GM12878 (cell line): ENCODE measurements at regions of chr2 and their contacts with region 1.

Region 1: DNA sequence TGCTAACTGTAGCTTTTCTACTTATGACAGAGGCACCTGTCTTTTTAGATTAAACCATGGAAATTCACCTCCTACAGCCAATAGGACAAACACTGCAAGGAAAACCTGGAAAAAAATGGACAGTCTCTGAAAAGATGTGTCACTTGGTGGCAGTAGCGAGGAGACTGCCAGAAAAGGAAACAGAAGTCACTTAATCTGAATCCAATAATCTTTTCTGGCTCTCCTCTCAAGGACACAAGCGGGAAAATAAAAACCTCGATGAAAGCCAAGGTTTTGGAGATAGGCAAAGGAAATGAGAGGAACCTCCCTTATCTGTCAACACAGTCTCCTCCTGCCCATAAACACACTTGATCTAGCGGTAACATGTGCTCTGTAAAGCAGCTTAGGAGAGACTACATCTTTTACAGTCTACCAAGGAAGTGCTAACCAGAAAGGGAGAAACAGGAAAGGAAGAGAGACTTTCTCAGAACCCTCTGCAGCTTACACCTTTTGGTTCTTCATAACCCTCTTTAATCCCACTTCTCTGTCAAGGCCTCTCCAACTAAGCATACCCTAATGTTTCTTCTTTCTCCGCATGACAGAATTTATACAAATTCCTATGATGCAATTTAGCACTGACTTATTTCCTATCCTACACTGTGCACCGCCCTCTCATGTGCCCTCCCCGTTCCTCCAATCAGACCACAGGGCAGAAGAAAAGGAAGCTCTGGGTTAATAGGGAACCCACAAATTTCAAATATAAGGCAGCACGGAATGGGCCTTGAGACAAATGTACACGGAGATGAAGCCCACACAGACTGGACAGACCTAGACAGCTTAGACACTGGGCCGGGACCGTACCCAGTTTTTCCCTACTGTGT is 52.8 kb downstream of the CLASP1 start:
- DNase-seq: peak; percentile 60
- ATAC-seq: peak; percentile 82
- H3K4me3 ChIP-seq: peak overlapping the region; percentile 62
- H3K27ac ChIP-seq: peak overlapping the region; percentile 84
- H3K4me1 ChIP-seq: peaks cover 38% of the 10 kb centered on the region
- H3K27me3 ChIP-seq: no peaks in the 10 kb centered on the region
- CTCF ChIP-seq: peak; percentile 28 to 46 (median 36); a peak in 4 of 6 replicates
- EP300 ChIP-seq: no peak; a peak in 1 of 4 replicates
- POLR2A ChIP-seq: peak; percentile 62
- RAD21 ChIP-seq: peak; percentile 46

Region 2: DNA sequence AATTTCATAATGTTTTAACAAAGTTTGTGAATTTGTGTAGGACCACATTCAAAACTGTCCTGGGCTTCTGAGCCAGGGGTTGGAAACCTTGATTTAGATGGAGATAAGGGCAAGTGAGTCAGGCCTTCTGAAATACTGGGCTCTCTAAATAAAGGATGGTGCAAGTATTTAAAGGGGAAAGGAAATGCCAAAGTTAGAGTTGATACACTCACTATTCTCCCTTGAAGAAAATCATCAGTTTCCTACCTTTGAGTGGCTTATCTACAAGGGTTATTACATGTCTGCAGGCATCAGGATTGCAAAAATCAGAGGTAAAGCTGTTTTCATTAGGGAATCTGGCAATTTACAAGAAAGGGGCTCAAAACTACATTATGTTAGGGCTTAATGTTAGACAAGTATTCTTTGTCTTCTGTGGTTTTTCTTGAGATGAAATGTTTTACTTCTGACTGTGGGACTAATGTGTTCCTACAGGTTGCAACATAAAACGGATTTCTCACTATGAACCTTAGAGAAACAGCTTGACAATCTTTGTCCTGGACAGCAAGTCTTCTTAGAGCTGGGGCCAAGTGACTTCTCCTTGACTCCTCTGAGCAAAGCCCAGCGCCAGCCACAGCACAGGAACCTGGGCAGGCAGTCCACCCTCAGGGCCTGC is 34.7 kb before region 1 on chr2:
- CTCF ChIA-PET with region 1: interaction called, 4 read pairs
- POLR2A ChIA-PET with region 1: interaction called, 4 read pairs
- RAD21 ChIA-PET with region 1: interaction called, 14 read pairs
- SMC1A ChIA-PET with region 1: interaction called, 12 read pairs
- in situ Hi-C with region 1: no loop called
- intact Hi-C with region 1: no loop called
- DNase-seq: no peak
- ATAC-seq: peak; percentile 15; the same call in 2 of the 3 replicates
- H3K4me3 ChIP-seq: no peak overlapping the region
- H3K27ac ChIP-seq: peak overlapping the region; percentile 45
- H3K4me1 ChIP-seq: peaks cover 17% of the 10 kb centered on the region
- H3K27me3 ChIP-seq: no peaks in the 10 kb centered on the region
- CTCF ChIP-seq: no peak
- EP300 ChIP-seq: no peak
- POLR2A ChIP-seq: no peak
- RAD21 ChIP-seq: no peak

Region 3: DNA sequence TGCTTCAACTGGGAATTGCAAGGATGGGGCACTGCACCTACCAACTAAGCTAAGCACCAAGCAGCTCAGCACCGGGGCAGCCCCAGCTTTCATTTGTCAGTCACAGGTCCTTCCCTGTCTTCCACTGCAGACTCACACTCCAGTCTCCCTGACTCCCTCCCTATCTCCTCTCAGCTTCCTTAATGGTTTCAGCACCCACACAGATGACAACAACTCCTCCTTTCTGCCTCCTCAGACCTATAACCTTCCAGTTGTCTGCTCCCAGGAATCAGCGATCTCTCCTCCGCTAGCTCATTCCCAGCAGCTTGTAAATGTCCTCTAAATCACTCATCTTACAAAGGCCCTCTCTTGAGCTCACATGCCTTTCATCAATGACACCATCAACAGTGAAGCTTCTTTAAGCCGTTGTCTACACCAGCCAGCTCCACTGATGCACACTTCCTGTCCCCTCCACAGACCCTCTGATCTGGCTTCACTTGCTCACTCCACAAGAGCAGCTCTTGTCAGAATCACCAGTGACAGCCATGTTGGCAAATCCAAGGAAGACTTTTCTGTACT is 20.7 kb after region 1 on chr2:
- CTCF ChIA-PET with region 1: interaction called, 4 read pairs
- POLR2A ChIA-PET with region 1: interaction called, 7 read pairs
- RAD21 ChIA-PET with region 1: interaction called, 9 read pairs
- SMC1A ChIA-PET with region 1: interaction called, 28 read pairs
- in situ Hi-C with region 1: no loop called
- intact Hi-C with region 1: no loop called
- DNase-seq: no peak
- ATAC-seq: peak; percentile 87
- H3K4me3 ChIP-seq: peak overlapping the region; percentile 20; the same call in 1 of the 2 replicates
- H3K27ac ChIP-seq: peak overlapping the region; percentile 70
- H3K4me1 ChIP-seq: peaks cover 18% of the 10 kb centered on the region
- H3K27me3 ChIP-seq: no peaks in the 10 kb centered on the region
- CTCF ChIP-seq: no peak
- EP300 ChIP-seq: no peak
- POLR2A ChIP-seq: no peak
- RAD21 ChIP-seq: no peak

Region 4: GRCh38 chr2:121649596-121650314 is 53.3 kb after region 1 on chr2:
- CTCF ChIA-PET with region 1: interaction called, 18 read pairs
- POLR2A ChIA-PET with region 1: interaction called, 5 read pairs
- RAD21 ChIA-PET with region 1: interaction called, 30 read pairs
- SMC1A ChIA-PET with region 1: interaction called, 12 read pairs
- in situ Hi-C with region 1: no loop called
- intact Hi-C with region 1: loop called (anchors 1 kb)
- DNase-seq: peak; percentile 89
- ATAC-seq: peak; percentile 95
- H3K4me3 ChIP-seq: peak overlapping the region; percentile 98
- H3K27ac ChIP-seq: peak overlapping the region; percentile 95
- H3K4me1 ChIP-seq: no peaks in the 10 kb centered on the region
- H3K27me3 ChIP-seq: no peaks in the 10 kb centered on the region
- CTCF ChIP-seq: no peak
- EP300 ChIP-seq: 0 out of 4 replicates have a peak, but pooled peaks have one; percentile 4 to 19
- POLR2A ChIP-seq: peak; percentile 74
- RAD21 ChIP-seq: 0 out of 2 replicates have a peak, but pooled peaks have one; percentile 1

Region 5: GRCh38 chr2:121722479-121722878 is 126.0 kb after region 1 on chr2:
- CTCF ChIA-PET with region 1: interaction called, 12 read pairs
- POLR2A ChIA-PET with region 1: no interaction called
- RAD21 ChIA-PET with region 1: interaction called, 7 read pairs
- SMC1A ChIA-PET with region 1: interaction called, 5 read pairs
- in situ Hi-C with region 1: no loop called
- intact Hi-C with region 1: loop called (anchors 5 kb)
- DNase-seq: no peak
- ATAC-seq: no peak
- H3K4me3 ChIP-seq: no peak overlapping the region
- H3K27ac ChIP-seq: no peak overlapping the region
- H3K4me1 ChIP-seq: no peaks in the 10 kb centered on the region
- H3K27me3 ChIP-seq: no peaks in the 10 kb centered on the region
- CTCF ChIP-seq: no peak
- EP300 ChIP-seq: no peak
- POLR2A ChIP-seq: no peak
- RAD21 ChIP-seq: no peak

Region 6: GRCh38 chr2:121771976-121772742 is 175.7 kb after region 1 on chr2:
- CTCF ChIA-PET with region 1: no interaction called
- POLR2A ChIA-PET with region 1: no interaction called
- RAD21 ChIA-PET with region 1: no interaction called
- SMC1A ChIA-PET with region 1: no interaction called
- in situ Hi-C with region 1: no loop called
- intact Hi-C with region 1: no loop called
- DNase-seq: no peak
- ATAC-seq: no peak
- H3K4me3 ChIP-seq: no peak overlapping the region
- H3K27ac ChIP-seq: no peak overlapping the region
- H3K4me1 ChIP-seq: no peaks in the 10 kb centered on the region
- H3K27me3 ChIP-seq: no peaks in the 10 kb centered on the region
- CTCF ChIP-seq: no peak
- EP300 ChIP-seq: no peak
- POLR2A ChIP-seq: no peak
- RAD21 ChIP-seq: no peak